Dendritic cell treated with granulocyte-macrophage colony-stimulating factor and Interleukin-4, amounts not matched to agents 40 ng/mL and 50 ng/mL, for 4 days (primary cell): ENCODE measurements at regions of chr11 and their contacts with region 1.

Region 1: DNA sequence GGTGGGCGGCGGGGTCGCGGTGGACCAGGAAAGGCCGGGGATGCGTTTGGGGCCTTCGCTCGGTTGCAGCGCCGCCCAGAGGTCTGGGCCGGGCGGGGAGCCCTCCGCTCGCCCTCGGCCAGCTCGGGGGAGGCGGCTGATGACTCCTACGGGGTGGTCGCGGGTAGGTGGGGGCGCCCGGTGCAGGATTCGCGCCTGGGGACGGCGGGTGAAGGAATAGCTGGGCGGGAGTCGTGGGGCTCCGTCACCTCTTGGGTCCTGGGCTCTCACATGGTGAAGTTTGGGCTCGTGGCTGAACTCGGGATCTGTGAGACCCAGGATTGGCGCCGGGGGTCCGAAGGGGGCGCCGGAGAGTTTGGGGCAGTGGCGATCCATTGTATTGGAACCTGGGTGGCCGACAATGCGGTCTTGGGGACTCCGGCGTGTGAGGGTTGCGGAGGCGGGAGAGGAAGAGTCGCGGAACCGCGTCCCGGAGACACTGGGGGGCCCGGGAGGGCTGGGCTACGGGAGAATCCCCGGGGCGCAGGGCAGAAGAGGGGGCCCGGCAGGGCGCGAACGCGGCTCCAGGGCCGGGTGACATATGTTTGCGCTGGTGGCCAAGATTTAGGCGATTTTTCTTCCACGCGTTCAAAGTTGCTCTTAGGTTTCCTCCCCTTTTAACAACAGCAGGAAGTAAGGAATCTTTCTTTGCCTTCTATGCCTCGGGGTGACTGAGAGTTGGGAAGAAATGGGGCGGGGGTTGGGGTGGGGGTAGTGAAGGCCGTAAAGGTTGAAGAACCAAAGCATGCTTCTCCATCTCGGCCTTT is 935 bp downstream of the QSER1 start:
- H3K4me3 Mint-ChIP-seq: peak overlapping the region; percentile 92
- H3K27ac Mint-ChIP-seq: peak overlapping the region; percentile 88
- H3K4me1 Mint-ChIP-seq: peaks cover 21% of the 10 kb centered on the region
- H3K27me3 Mint-ChIP-seq: peaks cover 3% of the 10 kb centered on the region

Region 2: DNA sequence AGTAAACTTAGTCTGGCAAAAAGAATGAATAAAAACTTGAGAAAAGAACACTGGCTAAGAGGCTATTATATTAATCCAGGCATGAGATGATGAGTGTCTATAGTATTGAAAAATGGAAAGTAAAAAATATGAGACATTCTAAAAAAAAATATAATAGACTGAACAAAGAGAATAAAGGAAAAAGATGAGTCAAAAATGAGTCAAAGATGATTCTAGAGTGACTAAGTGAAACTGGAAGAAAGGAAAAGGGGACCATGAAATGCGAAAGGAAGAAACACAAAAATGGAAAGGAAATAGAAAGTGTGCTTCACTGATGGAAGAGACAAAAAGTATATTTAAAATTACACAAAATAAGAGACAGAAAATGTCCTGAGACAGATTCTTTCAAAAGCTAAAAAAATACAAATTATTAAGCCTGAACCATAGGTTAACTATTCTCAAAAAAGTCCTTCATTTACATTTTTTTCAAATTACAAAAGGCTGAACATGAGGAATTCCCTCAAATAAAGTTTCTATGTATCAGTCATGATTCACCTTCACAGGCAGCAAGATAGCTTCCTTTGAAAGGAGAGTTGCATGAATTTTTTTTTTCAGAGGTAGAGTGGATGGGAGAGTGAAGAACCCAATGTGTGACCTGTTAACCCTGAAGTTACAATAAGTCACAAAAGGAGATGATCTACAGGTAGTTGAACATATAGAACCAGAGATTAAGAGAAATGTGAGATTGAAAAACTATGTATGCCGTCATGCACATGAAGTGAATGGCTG is 234.7 kb before region 1 on chr11:
- intact Hi-C with region 1: no loop called
- H3K4me3 Mint-ChIP-seq: no peak overlapping the region
- H3K27ac Mint-ChIP-seq: no peak overlapping the region
- H3K4me1 Mint-ChIP-seq: no peaks in the 10 kb centered on the region
- H3K27me3 Mint-ChIP-seq: peaks cover 2% of the 10 kb centered on the region

Region 3: GRCh38 chr11:32809313-32809712 is 84.2 kb before region 1 on chr11:
- intact Hi-C with region 1: loop called (anchors 5 kb)
- H3K4me3 Mint-ChIP-seq: no peak overlapping the region
- H3K27ac Mint-ChIP-seq: no peak overlapping the region
- H3K4me1 Mint-ChIP-seq: no peaks in the 10 kb centered on the region
- H3K27me3 Mint-ChIP-seq: no peaks in the 10 kb centered on the region

Region 4: DNA sequence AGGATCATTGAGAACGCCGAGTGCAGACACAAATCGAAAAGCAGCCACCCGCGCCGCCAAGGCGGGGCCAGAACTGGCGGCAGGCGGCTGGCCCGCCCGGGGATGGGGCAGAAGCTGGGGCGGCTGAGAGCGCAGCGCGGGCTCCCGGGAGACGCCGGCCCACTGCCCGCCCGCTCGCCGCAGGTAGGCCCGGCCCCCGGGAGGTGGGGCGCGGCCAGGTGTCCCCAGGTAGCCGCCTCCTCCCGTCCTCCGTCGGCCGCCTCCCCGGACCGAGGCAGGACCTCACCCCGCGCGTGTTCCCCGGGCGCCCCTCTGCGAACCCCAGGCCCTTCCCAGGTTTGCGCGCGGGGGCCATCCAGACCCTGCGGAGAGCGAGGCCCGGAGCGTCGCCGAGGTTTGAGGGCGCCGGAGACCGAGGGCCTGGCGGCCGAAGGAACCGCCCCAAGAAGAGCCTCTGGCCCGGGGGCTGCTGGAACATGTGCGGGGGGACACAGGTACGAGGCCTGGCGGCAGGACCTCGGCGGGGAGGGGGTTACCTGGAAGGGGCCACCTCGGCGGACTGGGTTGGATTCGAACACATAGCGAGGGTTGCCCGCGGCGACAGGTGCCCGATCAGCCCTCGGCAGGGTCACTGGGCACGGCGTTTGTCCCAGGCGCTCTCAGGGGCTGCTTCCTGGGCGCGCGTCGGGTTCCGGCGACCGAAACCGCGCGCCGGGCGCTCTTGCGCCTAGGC is 63.7 kb before region 1 on chr11 and contains the start of gene PRRG4:
- intact Hi-C with region 1: loop called (anchors 5 kb)
- H3K4me3 Mint-ChIP-seq: peak within 1 kb of the TSS; percentile 83
- H3K27ac Mint-ChIP-seq: peak within 1 kb of the TSS; percentile 89
- H3K4me1 Mint-ChIP-seq: peaks cover 36% of the 10 kb centered on the region
- H3K27me3 Mint-ChIP-seq: no peaks in the 10 kb centered on the region

Region 5: GRCh38 chr11:32858731-32859130 is 34.8 kb before region 1 on chr11:
- intact Hi-C with region 1: no loop called
- H3K4me3 Mint-ChIP-seq: no peak overlapping the region
- H3K27ac Mint-ChIP-seq: no peak overlapping the region
- H3K4me1 Mint-ChIP-seq: peaks cover under 1% of the 10 kb centered on the region
- H3K27me3 Mint-ChIP-seq: no peaks in the 10 kb centered on the region

Region 6: GRCh38 chr11:32881286-32881685 is 12.3 kb before region 1 on chr11:
- intact Hi-C with region 1: no loop called
- H3K4me3 Mint-ChIP-seq: no peak overlapping the region
- H3K27ac Mint-ChIP-seq: no peak overlapping the region
- H3K4me1 Mint-ChIP-seq: no peaks in the 10 kb centered on the region
- H3K27me3 Mint-ChIP-seq: no peaks in the 10 kb centered on the region

Region 7: GRCh38 chr11:33936725-33937604 is 1043.4 kb after region 1 on chr11:
- intact Hi-C with region 1: no loop called
- H3K4me3 Mint-ChIP-seq: no peak overlapping the region
- H3K27ac Mint-ChIP-seq: peak overlapping the region; percentile 59
- H3K4me1 Mint-ChIP-seq: peaks cover 54% of the 10 kb centered on the region
- H3K27me3 Mint-ChIP-seq: peaks cover 1% of the 10 kb centered on the region